IMR-90 (cell line): ENCODE measurements at regions of chr1 and their contacts with region 1.

Region 1: DNA sequence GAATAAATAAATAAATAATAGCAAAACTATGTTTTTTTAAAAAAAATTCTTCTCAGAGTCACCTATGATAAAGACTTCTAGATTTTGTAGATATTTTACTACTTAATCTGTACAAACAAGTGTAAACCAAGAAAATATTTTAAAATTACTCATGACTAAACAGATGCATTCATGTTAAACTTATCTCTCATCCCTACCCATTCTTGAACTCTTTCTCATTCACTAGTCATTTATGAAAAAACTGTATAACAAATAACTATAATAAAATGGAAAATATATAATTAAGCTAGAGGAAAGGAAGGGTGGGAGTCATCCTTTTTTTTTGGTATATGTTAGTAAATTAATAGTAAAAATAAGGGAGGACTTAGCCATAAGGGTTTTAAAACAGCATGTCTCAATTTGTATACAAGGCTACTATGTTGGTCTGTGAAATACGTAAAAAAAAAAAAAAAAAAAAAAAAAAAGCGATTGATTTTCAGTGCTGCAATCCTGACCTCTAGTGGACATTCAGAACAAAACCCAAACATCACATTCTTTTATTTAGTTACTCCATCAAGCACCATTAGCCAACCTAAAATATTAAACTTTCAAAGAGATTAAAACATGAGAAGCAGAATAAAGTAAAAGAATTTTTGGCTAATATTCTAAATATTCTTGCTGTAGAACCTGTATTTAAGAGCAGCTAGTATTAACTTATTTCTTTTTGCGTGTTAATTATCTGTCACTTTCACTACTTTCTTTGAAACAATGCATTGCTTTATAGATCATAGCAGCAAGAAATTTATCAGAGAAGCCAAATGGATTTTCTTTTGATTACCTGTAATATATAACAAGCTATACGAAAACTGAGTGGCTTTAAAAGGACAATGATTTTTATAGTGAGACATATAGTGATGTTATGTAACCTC is 255.8 kb upstream of the CACYBP start:
- DNase-seq: peak; percentile 63
- ATAC-seq: peak; percentile 51
- H3K4me3 ChIP-seq: no peak overlapping the region
- H3K27ac ChIP-seq: no peak overlapping the region
- H3K4me1 ChIP-seq: no peaks in the 10 kb centered on the region
- H3K27me3 ChIP-seq: no peaks in the 10 kb centered on the region
- CTCF ChIP-seq: peak; percentile 81
- POLR2A ChIP-seq: no peak
- RAD21 ChIP-seq: peak; percentile 72

Region 2: GRCh38 chr1:174097426-174097825 is 646.5 kb before region 1 on chr1:
- CTCF ChIA-PET with region 1: no interaction called
- POLR2A ChIA-PET with region 1: no interaction called
- dilution Hi-C with region 1: no loop called
- in situ Hi-C with region 1: no loop called
- intact Hi-C with region 1: loop called (anchors 5 kb)
- DNase-seq: no peak
- ATAC-seq: no peak
- H3K4me3 ChIP-seq: no peak overlapping the region
- H3K27ac ChIP-seq: no peak overlapping the region
- H3K4me1 ChIP-seq: no peaks in the 10 kb centered on the region
- H3K27me3 ChIP-seq: peaks cover 9% of the 10 kb centered on the region
- CTCF ChIP-seq: no peak
- POLR2A ChIP-seq: no peak
- RAD21 ChIP-seq: no peak